Calu3 (cell line): ENCODE measurements at regions of chr2 and their contacts with region 1.

Region 1: DNA sequence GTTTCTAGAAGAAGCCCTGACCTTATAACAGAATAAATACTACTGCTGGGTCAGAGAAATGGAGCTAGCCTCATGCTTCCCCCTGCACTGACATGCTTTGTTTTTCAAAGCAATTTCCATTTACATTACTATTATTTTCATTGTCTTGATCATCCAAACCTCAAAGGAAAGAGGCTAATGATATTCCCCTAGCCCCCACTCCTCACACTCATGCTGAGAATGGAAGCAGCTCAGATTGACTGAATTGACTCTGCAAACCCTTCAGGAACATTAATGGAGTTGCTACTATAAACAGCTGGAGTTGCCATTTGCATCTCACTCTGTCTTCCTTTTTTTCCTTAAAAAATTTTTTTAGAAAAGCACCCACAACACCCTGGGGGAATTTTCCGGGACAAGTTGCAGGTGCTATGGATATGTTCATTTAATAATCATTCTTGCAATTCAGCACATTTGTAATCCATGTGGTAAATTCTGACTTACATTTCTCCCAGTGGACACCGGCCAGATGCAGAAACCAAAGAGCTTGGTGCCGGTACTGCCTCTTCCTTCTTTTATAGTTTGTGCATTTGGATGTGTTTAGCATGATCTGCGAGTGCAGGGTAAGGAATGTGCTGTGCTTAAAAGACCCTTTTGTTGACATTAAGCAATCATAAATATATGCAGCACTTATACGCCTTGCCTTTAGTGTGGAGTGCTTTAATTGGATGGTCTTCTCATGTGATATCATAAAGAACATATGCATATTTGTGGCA is 103.3 kb upstream of the OSR1 start:
- DNase-seq: no peak
- H3K4me3 Mint-ChIP-seq: no peak overlapping the region
- H3K27ac Mint-ChIP-seq: no peak overlapping the region
- H3K4me1 Mint-ChIP-seq: no peaks in the 10 kb centered on the region
- H3K27me3 Mint-ChIP-seq: no peaks in the 10 kb centered on the region
- CTCF ChIP-seq: no peak

Region 2: GRCh38 chr2:19733931-19734425 is 272.3 kb after region 1 on chr2:
- CTCF ChIA-PET with region 1: interaction called, 10 read pairs
- intact Hi-C with region 1: no loop called
- DNase-seq: no peak
- H3K4me3 Mint-ChIP-seq: no peak overlapping the region
- H3K27ac Mint-ChIP-seq: no peak overlapping the region
- H3K4me1 Mint-ChIP-seq: no peaks in the 10 kb centered on the region
- H3K27me3 Mint-ChIP-seq: peaks cover 16% of the 10 kb centered on the region
- CTCF ChIP-seq: no peak